ENCODE measurements at regions of chr1 and their contacts with region 1.

Region 1: DNA sequence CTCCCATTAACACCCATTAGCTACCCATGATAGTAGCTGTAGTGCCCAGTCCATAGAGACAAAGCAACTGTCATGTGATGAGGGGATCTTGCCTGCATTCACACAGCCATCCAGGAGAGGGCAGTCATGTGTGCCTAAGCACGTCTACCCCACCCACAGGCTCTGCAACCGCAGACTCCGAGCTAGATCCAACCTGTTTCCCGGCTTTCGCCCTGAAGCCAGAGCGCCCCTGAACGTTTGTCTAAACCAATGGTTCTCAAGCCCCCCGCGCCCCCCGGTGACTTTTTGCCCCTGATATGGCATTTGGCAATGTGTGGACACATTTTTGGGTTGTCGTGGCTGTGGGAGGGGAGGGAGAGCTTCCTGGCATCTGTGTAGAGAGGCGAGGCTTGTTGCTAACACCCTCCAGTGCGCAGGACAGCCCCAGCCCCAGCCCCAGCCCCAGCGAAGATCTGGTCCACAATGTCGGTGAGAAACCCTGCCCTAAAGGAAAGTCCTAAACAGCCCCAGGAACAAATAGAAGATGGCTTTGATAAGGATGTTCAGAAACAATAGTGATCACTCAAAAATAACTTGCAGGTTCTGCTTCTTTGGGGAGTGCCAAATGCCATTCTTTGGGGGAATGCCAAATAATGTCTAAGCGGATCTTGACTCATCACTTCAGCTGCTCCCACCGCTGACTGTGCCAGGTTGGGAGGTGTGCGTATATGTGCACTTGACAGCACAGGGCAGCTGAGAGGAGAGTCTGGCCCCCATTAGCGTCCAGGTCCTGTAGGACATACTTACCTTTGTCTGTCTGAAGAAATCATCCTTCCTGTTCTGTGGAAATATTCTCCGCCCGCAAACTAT is 34.5 kb downstream of the SLC44A3 start:
- DNase-seq: peak; percentile 77
- H3K4me3 ChIP-seq: no peak overlapping the region
- H3K27ac ChIP-seq: no peak overlapping the region
- H3K4me1 ChIP-seq: no peaks in the 10 kb centered on the region
- CTCF ChIP-seq: peak; percentile 83

Region 2: DNA sequence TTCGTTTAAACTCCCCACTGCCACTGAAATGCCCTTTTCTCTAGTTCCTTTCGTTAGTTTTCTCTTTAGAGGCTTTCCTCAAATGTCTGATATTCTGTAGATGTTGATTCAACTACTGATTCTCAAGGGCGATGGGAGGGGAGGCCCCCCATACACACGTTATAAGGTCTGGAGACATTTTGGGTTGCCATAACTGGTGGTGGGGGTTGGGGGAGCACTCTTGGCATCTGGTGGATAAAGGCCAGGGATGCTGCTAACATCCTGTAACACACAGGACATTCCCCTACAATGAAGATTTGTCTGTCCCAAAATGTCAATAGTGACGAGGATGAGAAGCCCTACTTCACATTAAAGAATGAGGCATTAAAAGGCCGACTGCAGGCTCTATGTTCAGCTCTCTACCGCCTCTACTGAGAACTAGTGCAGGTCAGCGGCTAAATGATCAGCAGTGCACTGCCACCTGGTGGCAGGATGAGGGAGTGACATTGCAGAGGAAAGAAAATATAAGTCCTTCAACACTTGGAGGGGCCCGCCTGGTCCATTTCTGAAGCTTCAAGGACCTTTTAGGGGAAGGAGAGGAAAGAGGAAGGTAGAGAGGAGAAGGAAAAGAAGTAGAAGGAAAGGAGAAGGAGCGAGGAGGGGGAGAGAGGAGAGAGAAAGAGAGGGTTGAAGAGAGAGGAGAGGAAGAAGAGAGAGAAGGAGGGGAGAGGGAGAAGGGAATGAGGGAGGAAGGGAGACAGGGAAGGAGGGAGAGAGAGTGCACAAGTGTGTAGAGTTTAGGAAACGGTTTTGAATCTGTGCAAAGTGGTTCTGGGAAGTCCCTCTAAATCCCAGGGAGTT is 188.7 kb after region 1 on chr1:
- CTCF ChIA-PET with region 1: interaction called, 9 read pairs
- POLR2A ChIA-PET with region 1: no interaction called
- intact Hi-C with region 1: loop called (anchors 1 kb)
- DNase-seq: peak; percentile 83
- H3K4me3 ChIP-seq: no peak overlapping the region
- H3K27ac ChIP-seq: no peak overlapping the region
- H3K4me1 ChIP-seq: no peaks in the 10 kb centered on the region
- CTCF ChIP-seq: peak; percentile 100